Right cardiac atrium (tissue), 5 donors: ENCODE measurements at regions of chr12 and their contacts with region 1.

Region 1: DNA sequence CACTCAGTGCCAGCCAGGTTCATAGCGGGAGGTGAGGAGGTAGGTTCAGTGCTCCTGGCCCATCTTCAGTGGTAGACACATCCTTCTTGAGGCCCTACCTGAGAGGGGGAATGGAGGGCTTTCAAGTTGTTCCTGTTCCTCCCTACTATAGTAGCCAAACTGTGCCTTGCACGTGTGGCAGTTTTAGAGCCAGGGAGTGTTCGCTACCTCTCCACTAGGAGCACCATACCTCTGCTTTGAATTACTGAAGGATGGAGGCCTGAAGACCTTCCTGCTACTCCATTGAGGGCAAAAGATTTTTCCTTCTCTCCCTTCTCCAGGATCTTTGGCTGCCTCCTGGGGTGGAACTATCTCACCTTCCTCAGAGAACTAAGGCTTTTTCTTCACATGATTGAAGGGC is 5.9 kb upstream of the ALG10 start:
- DNase-seq: no peak
- ATAC-seq: no peak
- H3K4me3 ChIP-seq: no peak overlapping the region
- H3K27ac ChIP-seq: no peak overlapping the region
- H3K4me1 ChIP-seq: no peaks in the 10 kb centered on the region
- H3K27me3 ChIP-seq: no peaks in the 10 kb centered on the region

Region 2: DNA sequence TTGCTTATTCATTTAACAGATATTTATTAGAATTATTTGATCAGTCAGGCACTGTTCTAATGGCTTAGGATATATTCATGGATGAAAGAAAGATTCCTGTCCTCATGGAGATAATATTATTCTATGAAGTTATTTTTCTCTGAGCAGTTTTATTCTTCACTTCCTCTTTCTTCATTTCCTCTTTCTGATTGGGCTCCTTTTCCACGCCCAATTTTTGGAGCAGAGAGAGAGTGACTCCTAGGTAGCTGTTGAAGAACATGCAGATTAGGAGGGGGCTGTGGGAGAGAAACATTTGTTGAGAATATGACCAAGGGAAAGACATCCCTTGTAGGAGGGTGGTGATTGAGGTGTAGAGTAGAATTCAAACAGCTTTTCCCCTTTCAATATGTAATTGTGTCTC is 1254.6 kb before region 1 on chr12:
- intact Hi-C with region 1: loop called in 3 of 4 experiments (anchors 5 to 10 kb)
- DNase-seq: no peak
- ATAC-seq: no peak
- H3K4me3 ChIP-seq: no peak overlapping the region
- H3K27ac ChIP-seq: no peak overlapping the region
- H3K4me1 ChIP-seq: no peaks in the 10 kb centered on the region
- H3K27me3 ChIP-seq: no peaks in the 10 kb centered on the region